Sigmoid colon (tissue), 7 donors: ENCODE measurements at regions of chrX and their contacts with region 1.

Region 1: GRCh38 chrX:81259020-81259713 is 57.3 kb downstream of the SH3BGRL start:
- DNase-seq: no peak
- H3K4me3 ChIP-seq: no peak overlapping the region
- H3K27ac ChIP-seq: peak overlapping the region; percentile 79 to 84 (median 80)
- H3K4me1 ChIP-seq: peaks cover 0 to 76% (median 16%) of the 10 kb centered on the region in 4 donors
- H3K27me3 ChIP-seq: no peaks in the 10 kb centered on the region
- CTCF ChIP-seq: no peak
- EP300 ChIP-seq: peak in 1 of 4 donors; percentile 6
- POLR2A ChIP-seq: no peak

Region 2: GRCh38 chrX:81201671-81202455 is 57.3 kb before region 1 on chrX and contains the starts of genes HMGN5 and SH3BGRL:
- intact Hi-C with region 1: loop called (anchors 5 kb)
- DNase-seq: peak; percentile 93
- H3K4me3 ChIP-seq: peak within 1 kb of the TSS; percentile 43 to 60 (median 54)
- H3K27ac ChIP-seq: peak within 1 kb of the TSS; percentile 80 to 84 (median 82)
- H3K4me1 ChIP-seq: peaks cover 0 to 14% (median 1%) of the 10 kb centered on the region in 4 donors
- H3K27me3 ChIP-seq: no peaks in the 10 kb centered on the region
- CTCF ChIP-seq: no peak
- EP300 ChIP-seq: peak in 1 of 4 donors; percentile 2
- POLR2A ChIP-seq: peak in 1 of 2 donors; percentile 28
- total RNA-seq, gene HMGN5: 5.3 to 23.5 (median 9.8) TPM
- total RNA-seq, gene SH3BGRL: 358 to 452 (median 373) TPM